Activated T-helper 1 cell treated with anti-CD3 and anti-CD28 coated beads, Interleukin-12 subunit alpha, Interleukin-12 subunit beta, Interleukin-2, Interleukin-4 antibody, amounts not matched to agents 30 ng/mL and 10 ng/mL and 1 ng/mL, durations not matched to agents 14 hours and 24 hours and 36 hours (primary cell): ENCODE measurements at regions of chr16 and their contacts with region 1.

Region 1: GRCh38 chr16:81778861-81779535 is at the start of gene PLCG2:
- DNase-seq: peak; percentile 77
- H3K4me3 Mint-ChIP-seq: peak within 1 kb of the TSS; percentile 87
- H3K27ac Mint-ChIP-seq: peak within 1 kb of the TSS; percentile 42
- H3K4me1 Mint-ChIP-seq: peaks cover 19% of the 10 kb centered on the region
- H3K27me3 Mint-ChIP-seq: peaks cover 39% of the 10 kb centered on the region
- total RNA-seq, gene PLCG2: 12.9 and 13.7 TPM in 2 replicates

Region 2: DNA sequence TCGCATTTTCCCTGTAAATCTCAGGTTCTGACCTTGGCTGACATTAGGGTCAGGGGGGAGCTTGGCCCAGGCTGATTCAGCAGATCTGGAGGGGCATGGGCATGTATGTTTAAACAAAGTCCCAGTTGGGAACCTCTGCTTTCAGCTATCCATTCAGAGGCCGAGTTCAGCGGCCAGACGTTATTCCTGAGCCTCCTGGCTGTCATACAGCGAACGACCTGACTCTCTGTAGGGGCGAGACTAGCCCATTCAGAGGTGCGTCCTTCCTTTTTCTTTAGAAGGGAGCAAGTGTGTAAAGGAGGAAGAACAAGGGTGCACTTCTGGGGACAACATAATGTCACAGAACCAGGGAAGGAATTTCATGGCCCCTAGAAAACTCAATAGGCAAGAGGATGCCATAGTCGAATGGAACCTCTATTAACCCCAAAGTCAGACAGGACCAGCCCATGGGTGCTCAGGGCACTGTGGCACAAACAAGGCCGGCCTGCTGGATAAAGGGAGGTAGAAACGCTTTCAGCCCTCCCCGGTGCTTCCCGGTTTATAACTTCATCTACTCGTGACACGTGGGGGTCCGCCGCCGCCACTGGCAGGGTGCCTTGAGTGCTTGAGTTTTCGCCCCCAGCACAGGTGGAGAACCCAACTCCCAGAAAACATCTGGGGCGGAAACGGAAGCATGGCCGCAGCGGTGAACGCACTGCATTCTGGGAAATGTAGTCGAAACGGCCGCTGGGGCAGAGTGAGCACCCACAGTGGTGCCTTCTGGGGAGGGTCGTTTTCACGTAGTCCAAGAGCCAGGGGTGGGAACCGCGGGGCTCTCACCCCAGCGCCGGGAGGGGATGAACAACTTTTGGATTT is 33.1 kb before region 1 on chr16:
- intact Hi-C with region 1: loop called (anchors 2 kb)
- DNase-seq: peak; percentile 65
- H3K4me3 Mint-ChIP-seq: peak overlapping the region; percentile 58
- H3K27ac Mint-ChIP-seq: peak overlapping the region; percentile 81
- H3K4me1 Mint-ChIP-seq: peaks cover 35% of the 10 kb centered on the region
- H3K27me3 Mint-ChIP-seq: no peaks in the 10 kb centered on the region

Region 3: DNA sequence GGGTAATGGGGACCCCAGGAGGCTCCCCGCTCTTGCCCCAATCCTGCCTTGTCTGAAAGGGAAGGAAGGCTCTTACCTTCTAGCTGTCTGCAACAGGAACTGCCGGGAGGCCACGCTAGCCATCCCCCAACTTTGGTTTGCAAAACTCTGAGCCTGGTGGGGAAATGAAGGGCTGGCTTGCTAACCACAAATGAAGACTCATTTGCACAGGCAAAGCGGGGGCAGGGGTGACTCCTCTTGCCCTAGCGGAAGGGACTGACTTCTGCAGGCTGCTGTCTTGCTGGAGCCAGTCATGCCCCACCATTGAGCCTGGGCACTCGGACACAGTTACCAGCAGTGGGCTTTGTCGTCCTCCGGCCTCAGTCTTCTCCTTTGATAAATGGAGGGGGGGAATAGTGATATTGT is 52.7 kb after region 1 on chr16:
- intact Hi-C with region 1: loop called (anchors 2 kb)
- DNase-seq: peak; percentile 21
- H3K4me3 Mint-ChIP-seq: peak overlapping the region; percentile 30
- H3K27ac Mint-ChIP-seq: no peak overlapping the region
- H3K4me1 Mint-ChIP-seq: peaks cover 30% of the 10 kb centered on the region
- H3K27me3 Mint-ChIP-seq: peaks cover 16% of the 10 kb centered on the region

Region 4: GRCh38 chr16:81873843-81874752 is 95.1 kb after region 1 on chr16:
- intact Hi-C with region 1: loop called (anchors 2 kb)
- DNase-seq: peak; percentile 38
- H3K4me3 Mint-ChIP-seq: no peak overlapping the region
- H3K27ac Mint-ChIP-seq: no peak overlapping the region
- H3K4me1 Mint-ChIP-seq: peaks cover 8% of the 10 kb centered on the region
- H3K27me3 Mint-ChIP-seq: peaks cover 12% of the 10 kb centered on the region